Posterior vena cava (tissue), 2 donors: ENCODE measurements at regions of chr2 and their contacts with region 1.

Region 1: DNA sequence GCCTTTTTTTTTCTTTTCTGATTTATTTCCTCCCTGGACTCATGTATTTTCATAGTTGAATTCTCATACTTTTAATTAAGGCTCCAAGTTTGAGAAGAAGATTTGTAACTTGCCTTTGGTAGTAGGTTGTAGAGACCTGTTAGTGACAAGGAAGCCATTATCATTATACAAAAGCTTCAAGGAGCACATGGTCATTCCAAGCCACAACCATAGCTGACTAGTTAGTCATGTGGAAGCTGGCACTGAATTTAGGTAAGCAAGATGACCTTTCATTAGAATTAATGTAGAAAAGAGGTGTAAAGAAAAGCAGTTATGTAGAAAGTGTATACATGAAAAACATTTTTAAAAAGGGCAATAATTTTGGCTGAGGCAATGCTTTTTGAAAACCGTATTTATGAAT is 89.7 kb downstream of the LRP1B start:
- DNase-seq: no peak

Region 2: DNA sequence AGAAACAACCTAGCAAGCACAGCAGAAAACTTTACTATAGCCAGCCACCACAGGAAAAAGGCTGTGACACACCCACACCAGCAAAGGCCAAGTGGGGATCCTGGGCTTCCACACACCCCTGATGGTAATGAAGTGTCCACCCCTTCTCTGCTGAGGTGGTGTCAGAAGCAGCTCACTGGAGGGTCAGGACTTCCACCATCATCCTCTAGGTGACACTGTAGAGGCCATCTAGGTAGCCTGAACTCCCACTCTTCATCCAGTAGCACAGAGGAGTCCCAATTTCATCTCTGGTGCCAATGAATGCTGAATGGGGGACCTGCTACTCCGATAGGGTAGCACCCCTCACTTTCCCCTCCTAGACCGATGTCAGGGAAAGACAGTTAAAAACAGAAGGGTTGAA is 1454.7 kb before region 1 on chr2:
- intact Hi-C with region 1: no loop called
- DNase-seq: no peak

Region 3: GRCh38 chr2:142398212-142398611 is 357.1 kb after region 1 on chr2:
- intact Hi-C with region 1: no loop called
- DNase-seq: no peak

Region 4: GRCh38 chr2:143545949-143546255 is 1504.8 kb after region 1 on chr2:
- intact Hi-C with region 1: loop called in 1 of 2 experiments (anchors 10 kb)
- DNase-seq: no peak